ENCODE measurements at regions of chrX and their contacts with region 1.

Region 1: GRCh38 chrX:129823115-129823514 is 20.6 kb downstream of the ZDHHC9 start:
- DNase-seq: peak; percentile 67
- ATAC-seq: peak; percentile 97
- H3K4me3 Mint-ChIP-seq: peak overlapping the region; percentile 53
- H3K27ac Mint-ChIP-seq: peak overlapping the region; percentile 91
- H3K4me1 Mint-ChIP-seq: peaks cover 17% of the 10 kb centered on the region
- H3K27me3 Mint-ChIP-seq: no peaks in the 10 kb centered on the region

Region 2: GRCh38 chrX:129553619-129554288 is 269.4 kb before region 1 on chrX:
- CTCF ChIA-PET with region 1: no interaction called
- DNase-seq: no peak
- ATAC-seq: no peak
- H3K4me3 Mint-ChIP-seq: no peak overlapping the region
- H3K27ac Mint-ChIP-seq: no peak overlapping the region
- H3K4me1 Mint-ChIP-seq: no peaks in the 10 kb centered on the region
- H3K27me3 Mint-ChIP-seq: no peaks in the 10 kb centered on the region

Region 3: GRCh38 chrX:129637217-129638109 is 185.7 kb before region 1 on chrX:
- CTCF ChIA-PET with region 1: interaction called, 16 read pairs
- DNase-seq: peak; percentile 77
- ATAC-seq: peak; percentile 83
- H3K4me3 Mint-ChIP-seq: no peak overlapping the region
- H3K27ac Mint-ChIP-seq: no peak overlapping the region
- H3K4me1 Mint-ChIP-seq: peaks cover 10% of the 10 kb centered on the region
- H3K27me3 Mint-ChIP-seq: no peaks in the 10 kb centered on the region

Region 4: DNA sequence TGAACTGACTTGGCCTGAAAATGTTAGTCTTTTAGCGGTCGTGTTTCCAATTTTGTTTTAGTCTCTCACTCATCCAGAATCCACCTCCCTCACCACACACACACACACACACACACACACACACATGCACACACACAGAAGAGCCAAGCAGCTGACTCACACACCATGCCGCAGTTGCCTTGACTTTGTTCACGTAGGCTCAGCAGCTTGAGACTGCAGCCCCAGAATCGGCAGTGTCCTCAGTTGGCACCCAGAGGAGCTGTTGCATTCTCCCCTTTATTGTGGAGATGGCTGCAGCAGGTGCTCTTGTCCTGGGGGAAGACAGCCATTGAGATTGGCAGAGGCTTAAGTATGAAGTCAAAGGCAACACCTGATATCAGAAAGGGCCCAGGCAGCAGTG is 105.2 kb before region 1 on chrX:
- CTCF ChIA-PET with region 1: no interaction called
- DNase-seq: no peak
- ATAC-seq: no peak
- H3K4me3 Mint-ChIP-seq: no peak overlapping the region
- H3K27ac Mint-ChIP-seq: no peak overlapping the region
- H3K4me1 Mint-ChIP-seq: peaks cover 10% of the 10 kb centered on the region
- H3K27me3 Mint-ChIP-seq: no peaks in the 10 kb centered on the region

Region 5: DNA sequence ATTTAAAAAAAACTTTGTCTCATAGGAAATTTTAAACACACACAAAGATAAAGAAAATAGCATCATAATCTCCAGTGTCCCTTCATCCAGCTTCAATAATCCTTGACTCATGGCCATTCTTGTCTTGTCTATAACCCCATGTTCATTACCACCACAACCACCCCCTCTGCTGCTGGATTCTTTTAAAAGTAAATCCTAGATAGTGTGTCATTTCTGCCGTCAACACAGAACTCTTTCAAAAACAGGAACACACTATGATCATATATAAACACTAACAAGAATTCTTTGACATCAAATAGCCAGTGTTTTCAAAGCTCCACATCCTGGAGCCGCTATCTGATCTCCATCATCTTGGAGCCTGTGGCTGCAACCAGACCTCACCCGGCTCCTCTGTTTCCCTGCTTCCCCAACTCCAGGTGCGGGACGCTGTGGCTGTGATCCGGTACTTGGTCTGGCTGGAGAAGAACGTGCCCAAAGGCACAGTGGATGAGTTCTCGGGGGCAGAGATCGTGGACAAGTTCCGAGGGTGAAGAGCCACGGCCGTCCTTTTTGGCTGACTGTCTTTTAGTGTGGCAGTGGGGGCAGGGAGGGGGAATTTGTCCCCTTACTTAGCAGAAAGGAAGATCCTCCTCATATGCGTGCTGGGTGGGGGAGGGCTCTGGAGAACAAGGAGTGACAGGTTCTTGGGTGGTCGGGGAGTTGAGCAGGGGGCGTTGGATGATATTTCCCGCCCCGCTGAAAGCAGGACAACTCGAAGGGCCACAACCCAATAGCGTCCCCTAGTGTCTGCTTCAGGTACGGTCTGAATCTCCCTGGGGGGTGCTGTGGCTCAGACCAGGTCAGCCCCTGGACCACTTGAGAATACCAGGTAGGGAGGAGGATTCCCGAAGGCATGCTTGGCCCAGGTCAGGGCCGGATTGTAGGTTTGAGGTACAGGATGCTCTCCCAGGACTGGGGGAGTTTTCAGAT is 68.8 kb before region 1 on chrX:
- CTCF ChIA-PET with region 1: interaction called, 12 read pairs
- DNase-seq: no peak
- ATAC-seq: no peak
- H3K4me3 Mint-ChIP-seq: no peak overlapping the region
- H3K27ac Mint-ChIP-seq: no peak overlapping the region
- H3K4me1 Mint-ChIP-seq: peaks cover 45% of the 10 kb centered on the region
- H3K27me3 Mint-ChIP-seq: no peaks in the 10 kb centered on the region

Measured in activated CD8-positive, alpha-beta memory T cell treated with anti-CD3 and anti-CD28 coated beads, Interleukin-2, amount 10 ng/mL, durations not matched to agents 7 days and 5 days (primary cell).